CD4-positive, alpha-beta memory T cell (primary cell): ENCODE measurements at regions of chr4 and their contacts with region 1.

Region 1: GRCh38 chr4:2934813-2935761 is 28.1 kb downstream of the NOP14 start:
- DNase-seq: peak; percentile 91 to 96 (median 94)
- H3K4me3 ChIP-seq: peak overlapping the region; percentile 91 to 92
- H3K4me3 Mint-ChIP-seq: peak overlapping the region; percentile 88 to 92 (median 89)
- H3K27ac ChIP-seq: peak overlapping the region; percentile 97
- H3K27ac Mint-ChIP-seq: peak overlapping the region; percentile 91 to 99 (median 95)
- H3K4me1 ChIP-seq: peaks cover 56% of the 10 kb centered on the region
- H3K4me1 Mint-ChIP-seq: peaks cover 35 to 62% (median 45%) of the 10 kb centered on the region in 4 donors
- H3K27me3 ChIP-seq: no peaks in the 10 kb centered on the region
- H3K27me3 Mint-ChIP-seq: no peaks in the 10 kb centered on the region

Region 2: GRCh38 chr4:2418650-2419571 is 516.2 kb before region 1 on chr4 and contains the start of gene CFAP99:
- CTCF ChIA-PET with region 1: no interaction called
- POLR2A ChIA-PET with region 1: no interaction called
- intact Hi-C with region 1: loop called (anchors 5 kb)
- DNase-seq: peak; percentile 96 to 99 (median 97)
- H3K4me3 ChIP-seq: peak within 1 kb of the TSS; percentile 44 to 72
- H3K4me3 Mint-ChIP-seq: peak within 1 kb of the TSS; percentile 89 to 95 (median 92)
- H3K27ac ChIP-seq: peak within 1 kb of the TSS; percentile 78
- H3K27ac Mint-ChIP-seq: peak within 1 kb of the TSS; percentile 92 to 100 (median 98)
- H3K4me1 ChIP-seq: peaks cover 39% of the 10 kb centered on the region
- H3K4me1 Mint-ChIP-seq: peaks cover 29 to 48% (median 36%) of the 10 kb centered on the region in 4 donors
- H3K27me3 ChIP-seq: no peaks in the 10 kb centered on the region
- H3K27me3 Mint-ChIP-seq: no peaks in the 10 kb centered on the region
- total RNA-seq, gene CFAP99: 0.12 to 0.19 TPM

Region 3: GRCh38 chr4:2662598-2662997 is 272.5 kb before region 1 on chr4:
- CTCF ChIA-PET with region 1: no interaction called
- POLR2A ChIA-PET with region 1: no interaction called
- intact Hi-C with region 1: no loop called
- DNase-seq: no peak
- H3K4me3 ChIP-seq: no peak overlapping the region
- H3K4me3 Mint-ChIP-seq: no peak overlapping the region
- H3K27ac ChIP-seq: no peak overlapping the region
- H3K27ac Mint-ChIP-seq: no peak overlapping the region
- H3K4me1 ChIP-seq: peaks cover 13% of the 10 kb centered on the region
- H3K4me1 Mint-ChIP-seq: peaks cover 17 to 22% (median 19%) of the 10 kb centered on the region in 4 donors
- H3K27me3 ChIP-seq: no peaks in the 10 kb centered on the region
- H3K27me3 Mint-ChIP-seq: no peaks in the 10 kb centered on the region

Region 4: GRCh38 chr4:2745981-2746806 is 188.9 kb before region 1 on chr4:
- CTCF ChIA-PET with region 1: no interaction called
- POLR2A ChIA-PET with region 1: interaction called, 7 read pairs
- intact Hi-C with region 1: loop called (anchors 5 kb)
- DNase-seq: peak; percentile 77 to 98 (median 80)
- H3K4me3 ChIP-seq: no peak overlapping the region
- H3K4me3 Mint-ChIP-seq: peak overlapping the region; percentile 15 to 79 (median 58)
- H3K27ac ChIP-seq: peak overlapping the region; percentile 85
- H3K27ac Mint-ChIP-seq: peak overlapping the region; percentile 93 to 98 (median 97)
- H3K4me1 ChIP-seq: peaks cover 27% of the 10 kb centered on the region
- H3K4me1 Mint-ChIP-seq: peaks cover 20 to 47% (median 30%) of the 10 kb centered on the region in 4 donors
- H3K27me3 ChIP-seq: no peaks in the 10 kb centered on the region
- H3K27me3 Mint-ChIP-seq: no peaks in the 10 kb centered on the region

Region 5: GRCh38 chr4:2761035-2761923 is 173.8 kb before region 1 on chr4:
- CTCF ChIA-PET with region 1: interaction called, 7 read pairs
- POLR2A ChIA-PET with region 1: interaction called, 15 read pairs
- intact Hi-C with region 1: loop called (anchors 1 kb)
- DNase-seq: no peak
- H3K4me3 ChIP-seq: no peak overlapping the region
- H3K4me3 Mint-ChIP-seq: peak overlapping the region in 1 of 8 donors; percentile 17
- H3K27ac ChIP-seq: no peak overlapping the region
- H3K27ac Mint-ChIP-seq: peak overlapping the region in 3 of 7 donors; percentile 37 to 80 (median 60)
- H3K4me1 ChIP-seq: peaks cover 14% of the 10 kb centered on the region
- H3K4me1 Mint-ChIP-seq: peaks cover 0 to 21% (median 9%) of the 10 kb centered on the region in 4 donors
- H3K27me3 ChIP-seq: no peaks in the 10 kb centered on the region
- H3K27me3 Mint-ChIP-seq: no peaks in the 10 kb centered on the region

Region 6: DNA sequence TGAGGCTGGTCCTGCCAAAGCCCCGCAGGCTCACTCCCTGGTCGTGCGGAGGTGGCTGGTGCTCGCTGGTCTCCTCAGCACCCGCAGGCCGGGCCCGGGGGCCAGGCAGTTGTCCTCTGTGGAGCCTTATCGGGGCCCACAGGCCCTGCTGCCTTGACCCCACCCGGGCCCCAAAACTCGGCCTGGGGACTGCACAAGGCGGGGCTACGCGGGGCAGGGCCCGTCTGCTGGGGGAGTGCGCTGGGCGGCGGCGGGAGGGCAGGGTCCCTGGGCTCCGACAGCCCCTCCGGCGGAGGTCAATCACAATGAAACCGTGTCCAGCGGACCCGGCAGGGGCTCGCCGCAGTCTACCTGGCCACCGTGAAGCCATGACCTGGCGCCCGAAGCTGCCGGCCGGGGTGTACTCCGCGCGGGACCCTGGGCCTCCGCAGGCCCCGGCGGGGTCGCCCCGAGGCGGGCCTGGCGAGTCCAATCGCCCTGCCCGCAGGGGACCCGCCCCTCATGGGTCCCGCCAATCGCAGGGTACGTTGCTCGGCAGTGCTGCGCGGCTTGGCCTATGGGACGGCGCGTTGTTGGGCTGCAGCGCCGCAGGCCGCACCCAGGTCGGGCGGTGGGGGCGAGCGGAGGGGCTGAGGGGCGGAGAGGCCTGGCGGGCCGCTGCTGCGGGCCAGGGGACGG is 91.7 kb before region 1 on chr4 and contains the start of gene ADD1:
- CTCF ChIA-PET with region 1: no interaction called
- POLR2A ChIA-PET with region 1: interaction called, 8 read pairs
- intact Hi-C with region 1: loop called (anchors 1 kb)
- DNase-seq: peak; percentile 87 to 99 (median 93)
- H3K4me3 ChIP-seq: peak within 1 kb of the TSS; percentile 72 to 81
- H3K4me3 Mint-ChIP-seq: peak within 1 kb of the TSS; percentile 90 to 98 (median 94)
- H3K27ac ChIP-seq: peak within 1 kb of the TSS; percentile 84
- H3K27ac Mint-ChIP-seq: peak within 1 kb of the TSS; percentile 93 to 97 (median 95)
- H3K4me1 ChIP-seq: peaks cover 71% of the 10 kb centered on the region
- H3K4me1 Mint-ChIP-seq: peaks cover 37 to 72% (median 45%) of the 10 kb centered on the region in 4 donors
- H3K27me3 ChIP-seq: no peaks in the 10 kb centered on the region
- H3K27me3 Mint-ChIP-seq: no peaks in the 10 kb centered on the region
- total RNA-seq, gene ADD1: 289 to 293 TPM

Region 7: DNA sequence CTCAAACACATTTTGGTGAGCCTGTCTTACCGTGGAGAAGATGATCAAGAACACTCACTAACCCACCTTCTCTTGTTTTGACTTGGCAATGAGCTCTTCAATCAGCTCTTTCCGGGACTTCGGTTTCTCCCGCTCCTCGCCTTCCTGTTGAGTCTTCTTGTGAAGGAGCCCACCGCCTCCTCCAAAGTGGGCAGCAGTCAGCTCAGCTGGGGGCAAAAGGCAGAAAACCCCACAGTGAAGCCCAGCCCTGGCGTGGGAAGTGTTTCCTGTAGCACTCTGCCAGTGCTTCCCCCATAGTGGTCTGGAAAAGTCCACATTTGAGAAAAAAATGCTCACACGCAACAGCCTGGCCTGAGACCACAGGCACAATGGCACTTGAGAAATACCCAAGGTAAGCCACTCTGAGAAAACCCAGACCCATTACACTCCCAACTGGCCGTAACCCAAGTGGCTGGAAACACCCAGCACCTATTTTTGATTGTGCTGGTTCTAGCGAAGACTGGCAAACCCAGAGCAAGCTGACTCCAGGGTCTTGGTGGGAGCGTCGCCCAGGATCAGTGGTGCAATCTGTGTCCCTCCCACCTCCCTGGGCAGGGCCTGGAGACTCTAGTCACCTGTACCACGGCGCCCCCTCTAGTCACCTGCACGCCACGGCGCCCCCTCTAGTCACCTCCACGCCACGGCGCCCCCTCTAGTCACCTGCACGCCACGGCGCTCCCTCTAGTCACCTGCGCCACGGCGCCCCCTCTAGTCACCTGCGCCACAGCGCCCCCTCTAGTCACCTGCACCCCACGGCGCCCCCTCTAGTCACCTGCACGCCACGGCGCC is 19.5 kb after region 1 on chr4:
- CTCF ChIA-PET with region 1: interaction called, 9 read pairs
- POLR2A ChIA-PET with region 1: interaction called, 82 read pairs
- intact Hi-C with region 1: loop called (anchors 2 kb)
- DNase-seq: peak; percentile 40 to 70 (median 44)
- H3K4me3 ChIP-seq: no peak overlapping the region
- H3K4me3 Mint-ChIP-seq: peak overlapping the region in 4 of 8 donors; percentile 20 to 83 (median 50)
- H3K27ac ChIP-seq: peak overlapping the region; percentile 23
- H3K27ac Mint-ChIP-seq: peak overlapping the region; percentile 83 to 98 (median 92)
- H3K4me1 ChIP-seq: peaks cover 33% of the 10 kb centered on the region
- H3K4me1 Mint-ChIP-seq: peaks cover 25 to 42% (median 34%) of the 10 kb centered on the region in 4 donors
- H3K27me3 ChIP-seq: no peaks in the 10 kb centered on the region
- H3K27me3 Mint-ChIP-seq: no peaks in the 10 kb centered on the region